CD8-positive, alpha-beta T cell (primary cell): ENCODE measurements at regions of chr13 and their contacts with region 1.

Region 1: DNA sequence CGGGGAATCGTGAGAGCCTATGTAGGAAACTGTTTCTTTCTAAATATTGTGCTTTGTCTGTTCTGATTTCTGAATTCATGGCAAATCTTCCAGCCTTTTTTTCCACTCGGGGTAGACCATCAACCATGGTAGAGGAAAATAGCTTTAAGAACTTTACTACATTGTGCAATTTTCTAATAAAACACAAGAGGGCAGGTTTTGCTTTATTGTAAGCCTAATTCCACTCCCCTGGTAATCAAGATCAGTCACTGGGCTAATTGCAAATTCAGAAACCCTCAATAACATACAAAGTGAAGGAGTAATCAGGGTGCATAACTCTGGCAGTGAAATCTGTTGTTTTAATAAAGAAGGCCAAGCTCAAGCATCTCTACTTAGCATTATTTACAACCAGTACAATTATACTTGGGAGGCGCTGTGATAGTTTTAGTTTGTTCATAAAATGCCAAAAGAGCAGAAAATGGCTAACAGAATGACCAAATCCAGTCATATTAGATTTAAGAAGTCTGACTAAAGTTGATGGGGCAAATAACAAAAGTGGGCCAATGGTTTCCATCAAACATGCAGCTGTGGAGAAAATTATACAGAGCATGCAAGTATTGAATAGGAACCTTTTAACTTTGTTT is 43.8 kb downstream of the DCT start:
- DNase-seq: peak in 2 of 9 experiments; percentile 54 to 64
- ATAC-seq: peak; percentile 81
- H3K4me3 ChIP-seq: no peak overlapping the region
- H3K4me3 Mint-ChIP-seq: no peak overlapping the region
- H3K27ac ChIP-seq: no peak overlapping the region
- H3K27ac Mint-ChIP-seq: no peak overlapping the region
- H3K4me1 ChIP-seq: no peaks in the 10 kb centered on the region
- H3K4me1 Mint-ChIP-seq: peaks cover 4% of the 10 kb centered on the region
- H3K27me3 ChIP-seq: no peaks in the 10 kb centered on the region
- H3K27me3 Mint-ChIP-seq: no peaks in the 10 kb centered on the region
- CTCF ChIP-seq: peak; percentile 82

Region 2: DNA sequence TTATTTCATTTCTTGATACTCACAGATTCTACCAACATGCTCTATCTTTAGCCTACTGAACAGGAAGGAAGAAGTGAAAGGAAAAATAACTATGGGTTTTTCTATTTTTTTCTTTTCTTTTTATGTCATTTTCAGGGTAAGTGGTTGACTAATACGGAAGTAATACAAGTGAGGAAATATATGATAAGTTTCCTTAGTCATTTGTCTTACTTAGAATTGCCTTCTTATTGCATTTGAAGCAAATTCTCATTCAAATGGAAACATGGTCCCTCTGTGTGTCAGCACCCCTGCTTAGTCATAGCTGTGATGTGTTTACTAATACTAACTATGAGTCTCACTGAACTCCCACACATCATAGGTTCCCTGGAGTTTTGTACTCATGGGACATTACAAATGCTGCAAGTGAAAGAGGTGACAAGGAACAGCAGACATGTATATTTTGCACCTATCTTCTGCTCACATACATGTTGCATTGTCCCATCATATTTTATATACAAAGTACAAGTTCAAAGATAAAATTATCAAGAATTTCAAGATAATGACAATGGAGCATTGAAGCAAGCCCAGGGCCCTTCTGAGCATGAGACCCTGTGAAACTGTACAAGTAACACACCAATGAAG is 16.3 kb before region 1 on chr13:
- CTCF ChIA-PET with region 1: interaction called, 18 read pairs
- POLR2A ChIA-PET with region 1: interaction called, 3 read pairs
- intact Hi-C with region 1: no loop called
- DNase-seq: peak in 1 of 9 experiments; percentile 13
- ATAC-seq: peak; percentile 75
- H3K4me3 ChIP-seq: no peak overlapping the region
- H3K4me3 Mint-ChIP-seq: no peak overlapping the region
- H3K27ac ChIP-seq: no peak overlapping the region
- H3K27ac Mint-ChIP-seq: peak overlapping the region; percentile 79
- H3K4me1 ChIP-seq: peaks cover 21% of the 10 kb centered on the region
- H3K4me1 Mint-ChIP-seq: peaks cover 22% of the 10 kb centered on the region
- H3K27me3 ChIP-seq: no peaks in the 10 kb centered on the region
- H3K27me3 Mint-ChIP-seq: peaks cover 5% of the 10 kb centered on the region
- CTCF ChIP-seq: no peak

Region 3: GRCh38 chr13:94534166-94534565 is 98.5 kb after region 1 on chr13:
- CTCF ChIA-PET with region 1: no interaction called
- POLR2A ChIA-PET with region 1: no interaction called
- intact Hi-C with region 1: no loop called
- DNase-seq: no peak
- ATAC-seq: no peak
- H3K4me3 ChIP-seq: no peak overlapping the region
- H3K4me3 Mint-ChIP-seq: no peak overlapping the region
- H3K27ac ChIP-seq: no peak overlapping the region
- H3K27ac Mint-ChIP-seq: no peak overlapping the region
- H3K4me1 ChIP-seq: peaks cover 15% of the 10 kb centered on the region
- H3K4me1 Mint-ChIP-seq: peaks cover 22% of the 10 kb centered on the region
- H3K27me3 ChIP-seq: no peaks in the 10 kb centered on the region
- H3K27me3 Mint-ChIP-seq: no peaks in the 10 kb centered on the region
- CTCF ChIP-seq: no peak

Region 4: GRCh38 chr13:94601446-94602431 is 166.0 kb after region 1 on chr13 and contains the start of gene GPR180:
- CTCF ChIA-PET with region 1: interaction called, 11 read pairs
- POLR2A ChIA-PET with region 1: interaction called, 3 read pairs
- intact Hi-C with region 1: no loop called
- DNase-seq: peak; percentile 66 to 97 (median 87)
- ATAC-seq: peak; percentile 98
- H3K4me3 ChIP-seq: peak within 1 kb of the TSS; percentile 62 to 76
- H3K4me3 Mint-ChIP-seq: peak within 1 kb of the TSS; percentile 84
- H3K27ac ChIP-seq: peak within 1 kb of the TSS; percentile 43 to 51
- H3K27ac Mint-ChIP-seq: peak within 1 kb of the TSS; percentile 86
- H3K4me1 ChIP-seq: peaks cover 3% of the 10 kb centered on the region
- H3K4me1 Mint-ChIP-seq: peaks cover 42% of the 10 kb centered on the region
- H3K27me3 ChIP-seq: no peaks in the 10 kb centered on the region
- H3K27me3 Mint-ChIP-seq: no peaks in the 10 kb centered on the region
- CTCF ChIP-seq: no peak
- total RNA-seq, gene GPR180: 0.64 to 0.71 TPM